CD8-positive, alpha-beta T cell (primary cell): ENCODE measurements at regions of chr1 and their contacts with region 1.

Region 1: DNA sequence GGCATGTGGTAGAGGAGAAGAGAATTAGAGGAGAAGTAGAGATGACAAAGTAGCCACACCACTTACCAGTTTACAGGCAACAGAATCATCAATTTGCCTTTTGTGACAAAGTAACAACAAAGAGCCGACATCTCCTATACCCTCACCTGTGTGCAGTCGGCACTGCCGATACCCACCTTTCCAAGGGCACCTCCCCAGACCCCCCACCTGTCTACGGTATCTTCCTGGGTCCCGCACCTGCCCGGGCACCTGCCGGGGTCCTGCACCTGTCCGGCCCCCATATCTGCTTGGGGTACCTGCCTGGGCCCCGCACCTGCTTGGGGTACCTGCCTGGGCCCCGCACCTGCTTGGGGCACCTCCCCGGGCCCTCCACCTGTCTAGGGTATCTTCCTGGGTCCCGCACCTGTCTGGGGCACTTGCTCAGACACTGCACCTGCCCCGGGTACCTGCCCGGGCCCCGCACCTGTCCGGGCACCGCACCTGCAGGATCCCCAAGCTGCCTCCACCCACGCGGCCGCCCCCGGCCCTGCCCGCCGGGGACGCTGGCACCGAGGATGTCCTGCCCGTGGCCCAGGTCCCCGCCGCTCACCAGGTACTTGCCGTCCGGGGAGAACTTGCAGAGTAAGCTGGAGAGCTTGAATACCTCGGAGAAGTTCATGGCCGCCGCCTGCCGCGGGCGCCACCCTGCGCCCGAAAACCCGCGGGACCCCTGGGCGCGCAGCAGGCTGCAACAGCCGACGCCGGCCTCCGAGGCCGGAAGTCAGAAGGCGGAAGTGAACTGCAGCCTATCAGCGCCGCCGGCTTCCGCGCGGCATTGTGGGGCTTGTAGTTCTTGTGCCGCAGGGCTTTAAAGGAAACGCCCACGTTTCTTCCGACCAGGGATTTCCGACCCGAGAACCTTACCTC is at the start of gene WRAP73:
- DNase-seq: peak; percentile 74 to 95 (median 88)
- ATAC-seq: peak; percentile 97
- H3K4me3 ChIP-seq: peak within 1 kb of the TSS; percentile 71
- H3K4me3 Mint-ChIP-seq: peak within 1 kb of the TSS; percentile 78
- H3K27ac ChIP-seq: peak within 1 kb of the TSS in 1 of 2 experiments; percentile 50
- H3K27ac Mint-ChIP-seq: no peak within 1 kb of the TSS
- H3K4me1 ChIP-seq: peaks cover 38% of the 10 kb centered on the region
- H3K4me1 Mint-ChIP-seq: peaks cover 32% of the 10 kb centered on the region
- H3K27me3 ChIP-seq: peaks cover 22 to 24% of the 10 kb centered on the region in 2 experiments
- H3K27me3 Mint-ChIP-seq: peaks cover 23% of the 10 kb centered on the region
- CTCF ChIP-seq: no peak
- total RNA-seq, gene WRAP73: 23.7 to 27.5 TPM

Region 2: DNA sequence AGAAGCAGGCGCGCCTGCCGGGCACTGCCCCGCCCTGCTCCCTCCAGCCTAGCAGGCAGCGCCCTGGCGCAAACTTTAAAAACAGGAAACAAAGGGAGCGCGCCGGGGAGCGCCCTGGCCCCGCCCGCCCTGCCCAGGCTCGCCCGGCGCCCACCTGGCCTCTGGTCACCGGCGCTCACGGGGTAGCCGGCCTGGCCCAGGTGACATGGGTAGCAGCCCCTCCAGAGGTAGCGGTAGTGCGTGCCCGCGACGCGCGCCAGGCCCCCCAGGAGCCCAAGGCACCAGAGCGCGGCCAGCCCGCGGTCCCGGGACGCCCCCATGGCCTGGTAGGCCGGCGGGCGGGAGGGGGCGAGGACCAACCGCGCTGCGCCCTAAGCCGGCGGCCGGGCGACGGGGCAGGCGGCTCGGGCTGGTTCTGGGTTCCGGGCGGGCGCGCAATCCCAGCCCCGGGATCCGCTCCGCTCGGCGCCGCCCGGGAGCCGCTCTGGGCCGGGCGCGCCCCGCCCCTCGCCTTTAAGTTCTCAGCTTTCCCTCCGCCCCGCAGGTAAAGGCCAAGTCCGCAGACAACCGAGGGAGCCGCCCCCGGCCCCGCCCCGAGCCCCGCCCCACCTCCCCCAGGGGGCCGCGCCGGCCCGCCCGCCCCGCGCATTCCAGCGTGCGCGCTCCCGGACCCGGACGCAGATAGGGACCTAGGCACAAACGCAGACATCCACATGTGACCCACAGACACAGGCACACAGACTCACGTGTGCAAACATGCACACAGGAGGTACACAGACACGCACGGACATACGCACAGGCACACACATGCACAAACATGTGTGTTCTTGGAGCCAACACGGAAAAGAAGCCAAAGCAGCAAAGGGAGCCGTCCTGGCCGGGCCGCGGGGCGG is 118.4 kb before region 1 on chr1:
- CTCF ChIA-PET with region 1: no interaction called
- POLR2A ChIA-PET with region 1: no interaction called
- intact Hi-C with region 1: loop called in 1 of 2 experiments (anchors 1 kb)
- DNase-seq: peak; percentile 60 to 93 (median 79)
- ATAC-seq: peak; percentile 84
- H3K4me3 ChIP-seq: peak overlapping the region; percentile 62 to 82
- H3K4me3 Mint-ChIP-seq: peak overlapping the region; percentile 84
- H3K27ac ChIP-seq: peak overlapping the region in 1 of 2 experiments; percentile 61
- H3K27ac Mint-ChIP-seq: peak overlapping the region; percentile 87
- H3K4me1 ChIP-seq: peaks cover 10% of the 10 kb centered on the region
- H3K4me1 Mint-ChIP-seq: peaks cover 15% of the 10 kb centered on the region
- H3K27me3 ChIP-seq: no peaks in the 10 kb centered on the region
- H3K27me3 Mint-ChIP-seq: no peaks in the 10 kb centered on the region
- CTCF ChIP-seq: no peak

Region 3: GRCh38 chr1:3746830-3747521 is 97.4 kb after region 1 on chr1:
- CTCF ChIA-PET with region 1: no interaction called
- POLR2A ChIA-PET with region 1: no interaction called
- intact Hi-C with region 1: loop called (anchors 1 kb)
- DNase-seq: peak; percentile 66 to 90 (median 86)
- ATAC-seq: peak; percentile 97
- H3K4me3 ChIP-seq: peak overlapping the region; percentile 51 to 63
- H3K4me3 Mint-ChIP-seq: peak overlapping the region; percentile 81
- H3K27ac ChIP-seq: peak overlapping the region; percentile 46 to 47
- H3K27ac Mint-ChIP-seq: peak overlapping the region; percentile 73
- H3K4me1 ChIP-seq: peaks cover 10% of the 10 kb centered on the region
- H3K4me1 Mint-ChIP-seq: peaks cover 27% of the 10 kb centered on the region
- H3K27me3 ChIP-seq: no peaks in the 10 kb centered on the region
- H3K27me3 Mint-ChIP-seq: no peaks in the 10 kb centered on the region
- CTCF ChIP-seq: no peak

Region 4: DNA sequence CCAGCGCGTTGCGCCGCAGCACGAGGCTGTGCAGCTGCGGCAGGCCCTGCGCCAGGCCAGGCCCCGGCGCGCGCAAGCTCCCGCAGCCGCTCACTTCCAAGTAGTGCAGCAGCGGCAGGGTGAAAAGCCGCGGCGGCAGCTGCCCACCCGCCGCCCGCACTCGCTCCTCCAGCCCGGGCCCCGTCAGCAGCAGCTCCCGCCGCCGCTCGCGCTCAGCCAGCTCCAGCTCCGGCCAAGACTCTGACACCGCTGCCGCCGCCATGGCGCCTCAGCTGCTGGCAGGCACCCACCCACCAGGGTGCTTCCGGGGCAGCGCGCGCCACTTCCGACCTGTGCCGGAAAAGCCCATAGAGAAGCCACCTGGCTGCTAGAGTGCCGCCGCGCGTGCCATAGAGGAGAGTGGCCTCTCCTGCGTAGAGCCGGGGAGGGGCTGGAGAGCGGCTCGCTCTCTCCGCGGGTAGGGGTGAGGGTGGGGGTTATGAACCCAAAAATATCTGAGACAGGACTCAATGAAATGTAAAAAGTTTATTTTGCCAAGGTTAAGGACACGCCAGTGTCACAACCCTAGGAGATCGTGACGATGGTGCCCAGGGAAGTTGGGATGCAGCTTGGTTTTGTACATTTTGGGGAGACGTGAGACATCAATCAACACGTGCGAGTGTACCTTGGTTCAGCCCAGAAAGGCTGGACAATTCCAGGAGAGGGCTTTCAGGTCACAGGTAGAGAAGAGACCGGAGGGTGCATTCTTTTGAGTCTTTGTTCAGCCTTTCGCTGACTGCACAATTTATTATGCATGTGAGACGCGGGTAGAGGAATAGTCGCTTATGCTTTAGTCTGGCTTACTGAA is 146.8 kb after region 1 on chr1 and contains the start of gene LRRC47:
- CTCF ChIA-PET with region 1: no interaction called
- POLR2A ChIA-PET with region 1: no interaction called
- intact Hi-C with region 1: loop called in 1 of 2 experiments (anchors 1 kb)
- DNase-seq: peak; percentile 86 to 95 (median 94)
- ATAC-seq: peak; percentile 99
- H3K4me3 ChIP-seq: peak within 1 kb of the TSS; percentile 51 to 75
- H3K4me3 Mint-ChIP-seq: peak within 1 kb of the TSS; percentile 93
- H3K27ac ChIP-seq: peak within 1 kb of the TSS; percentile 49 to 62
- H3K27ac Mint-ChIP-seq: peak within 1 kb of the TSS; percentile 94
- H3K4me1 ChIP-seq: peaks cover 31% of the 10 kb centered on the region
- H3K4me1 Mint-ChIP-seq: peaks cover 44% of the 10 kb centered on the region
- H3K27me3 ChIP-seq: no peaks in the 10 kb centered on the region
- H3K27me3 Mint-ChIP-seq: peaks cover 14% of the 10 kb centered on the region
- CTCF ChIP-seq: no peak
- total RNA-seq, gene LRRC47: 31.8 to 36.3 TPM

Region 5: GRCh38 chr1:3856908-3857790 is 207.6 kb after region 1 on chr1 and contains the starts of genes CEP104 and DFFB:
- CTCF ChIA-PET with region 1: no interaction called
- POLR2A ChIA-PET with region 1: no interaction called
- intact Hi-C with region 1: loop called in 1 of 2 experiments (anchors 2 kb)
- DNase-seq: peak; percentile 92 to 99 (median 97)
- ATAC-seq: peak; percentile 97
- H3K4me3 ChIP-seq: peak within 1 kb of the TSS; percentile 92 to 98
- H3K4me3 Mint-ChIP-seq: peak within 1 kb of the TSS; percentile 98
- H3K27ac ChIP-seq: peak within 1 kb of the TSS; percentile 65 to 75
- H3K27ac Mint-ChIP-seq: peak within 1 kb of the TSS; percentile 91
- H3K4me1 ChIP-seq: peaks cover 27% of the 10 kb centered on the region
- H3K4me1 Mint-ChIP-seq: peaks cover 40% of the 10 kb centered on the region
- H3K27me3 ChIP-seq: no peaks in the 10 kb centered on the region
- H3K27me3 Mint-ChIP-seq: no peaks in the 10 kb centered on the region
- CTCF ChIP-seq: no peak
- total RNA-seq, gene CEP104: 15.5 to 16.8 TPM
- total RNA-seq, gene DFFB: 3.4 to 3.7 TPM